Right ventricle myocardium inferior (tissue), 1 donor: ENCODE measurements at regions of chr6 and their contacts with region 1.

Region 1: GRCh38 chr6:149717588-149718458 is at the start of gene LATS1:
- DNase-seq: peak; percentile 96
- ATAC-seq: peak; percentile 94
- total RNA-seq, gene LATS1: 10.3 TPM

Region 2: DNA sequence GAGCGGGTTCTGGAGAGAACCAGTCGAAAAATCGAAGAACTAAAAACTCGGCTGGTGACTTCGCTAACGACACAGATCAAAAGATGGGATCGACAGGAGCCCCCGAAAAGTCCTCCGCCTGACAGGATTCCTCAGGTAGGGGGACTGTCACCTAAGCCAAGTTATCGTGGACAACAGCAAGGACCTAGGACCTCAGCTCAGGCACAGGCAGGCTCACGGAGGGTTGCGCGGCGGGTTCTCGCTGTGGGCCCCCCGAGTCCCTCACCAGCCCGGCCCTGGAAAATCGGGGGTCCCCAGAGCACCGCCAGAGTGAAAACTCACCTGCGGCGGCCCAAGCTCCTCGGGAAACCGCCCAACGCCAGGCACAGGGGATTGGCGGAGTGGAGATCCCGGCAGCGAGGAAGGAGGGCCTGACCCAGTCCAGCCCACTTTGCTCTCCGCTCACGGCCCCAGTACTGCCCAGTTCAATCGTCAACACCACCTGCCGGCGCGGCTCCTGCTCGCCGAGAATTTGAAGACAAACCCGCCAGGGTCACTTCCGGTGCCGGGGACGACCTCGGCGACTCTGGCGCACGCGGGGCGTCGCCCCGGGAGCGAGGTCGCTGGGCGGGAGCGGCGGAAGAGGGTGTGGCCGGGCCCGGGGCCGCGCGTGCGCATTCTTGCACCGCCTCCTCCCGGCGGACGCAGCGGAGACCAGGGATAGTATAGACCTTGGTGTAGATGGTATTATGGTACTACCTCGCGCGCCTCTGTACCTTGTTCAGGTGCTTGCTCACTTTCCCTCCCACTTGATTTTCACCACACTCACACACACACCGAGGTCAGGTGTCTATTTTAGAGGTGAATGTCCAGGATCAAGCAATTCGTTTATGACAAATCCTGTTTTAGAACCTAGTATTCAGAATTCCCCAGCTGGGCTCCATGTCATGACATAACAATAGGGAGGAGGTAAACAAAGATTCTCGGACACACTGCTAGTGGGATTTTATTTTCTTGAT is 69.4 kb before region 1 on chr6 and contains the start of gene KATNA1:
- intact Hi-C with region 1: loop called (anchors 2 kb)
- DNase-seq: peak; percentile 93
- ATAC-seq: peak; percentile 98
- total RNA-seq, gene KATNA1: 11.4 TPM

Region 3: DNA sequence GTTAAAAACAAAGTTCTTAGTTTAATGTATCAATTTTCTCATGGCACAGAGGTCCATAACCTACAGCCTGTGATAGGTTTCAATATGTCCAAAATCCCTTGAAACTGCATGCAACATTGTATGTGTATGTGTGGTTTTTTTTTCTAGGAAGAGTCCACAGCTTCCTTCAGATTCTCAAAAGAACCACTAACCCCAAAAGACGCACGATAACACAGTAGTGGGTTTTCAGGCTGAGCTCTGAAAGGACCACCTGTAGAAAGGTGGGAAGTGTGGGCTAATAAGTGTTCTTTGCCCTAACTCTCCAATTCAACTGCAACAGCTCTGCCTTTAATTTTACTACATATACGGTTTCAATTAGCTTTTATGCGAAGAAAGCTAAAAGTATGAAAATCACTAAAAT is 57.8 kb before region 1 on chr6:
- intact Hi-C with region 1: no loop called
- DNase-seq: no peak
- ATAC-seq: no peak

Region 4: GRCh38 chr6:149755300-149756260 is 37.8 kb after region 1 on chr6:
- intact Hi-C with region 1: no loop called
- DNase-seq: no peak
- ATAC-seq: peak; percentile 70

Region 5: DNA sequence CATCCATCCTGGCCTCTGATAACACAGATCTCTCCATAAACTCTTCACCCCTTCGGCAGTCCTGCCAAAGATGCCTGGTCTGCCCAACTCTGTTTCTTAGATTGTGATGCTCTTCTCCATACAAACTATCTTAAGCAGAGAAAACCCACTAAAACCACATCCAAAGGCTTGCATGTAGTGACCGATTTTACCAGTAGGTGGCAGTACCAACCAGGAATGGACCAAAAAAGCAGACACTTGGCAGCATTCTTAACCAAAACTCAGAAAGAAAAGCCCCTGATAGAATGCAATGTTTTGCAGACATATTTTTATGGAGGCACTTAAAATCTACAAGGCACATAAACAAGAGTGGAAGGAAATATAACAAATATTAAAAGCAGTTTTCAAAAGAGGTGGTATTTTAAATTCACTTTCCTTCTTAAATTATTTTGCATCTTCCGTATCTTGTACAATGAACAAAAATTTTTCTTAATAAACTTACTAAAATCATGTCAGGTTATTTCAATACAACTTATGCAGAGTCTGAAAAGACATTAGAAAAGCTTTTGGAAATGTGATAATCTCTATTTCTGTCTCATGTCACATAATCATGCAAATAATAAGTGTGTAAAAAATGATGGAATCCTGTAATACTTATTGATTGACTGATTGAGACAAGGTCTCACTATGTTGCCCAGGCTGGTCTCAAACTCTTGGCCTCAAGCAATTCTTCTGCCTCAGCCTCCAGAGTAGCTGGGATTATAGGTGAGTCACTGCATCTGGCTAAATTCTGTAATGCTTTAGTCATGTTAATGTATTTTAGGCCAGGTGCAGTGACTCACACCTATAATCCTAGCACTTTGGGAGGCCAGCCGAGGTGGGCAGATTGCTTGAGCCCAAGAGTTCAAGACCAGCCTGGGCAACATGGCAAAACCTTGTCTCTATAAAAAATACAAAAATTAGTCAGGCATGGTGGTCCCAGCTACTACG is 117.0 kb after region 1 on chr6:
- intact Hi-C with region 1: no loop called
- DNase-seq: no peak
- ATAC-seq: no peak